Caco-2 (cell line): ENCODE measurements at regions of chr11 and their contacts with region 1.

Region 1: DNA sequence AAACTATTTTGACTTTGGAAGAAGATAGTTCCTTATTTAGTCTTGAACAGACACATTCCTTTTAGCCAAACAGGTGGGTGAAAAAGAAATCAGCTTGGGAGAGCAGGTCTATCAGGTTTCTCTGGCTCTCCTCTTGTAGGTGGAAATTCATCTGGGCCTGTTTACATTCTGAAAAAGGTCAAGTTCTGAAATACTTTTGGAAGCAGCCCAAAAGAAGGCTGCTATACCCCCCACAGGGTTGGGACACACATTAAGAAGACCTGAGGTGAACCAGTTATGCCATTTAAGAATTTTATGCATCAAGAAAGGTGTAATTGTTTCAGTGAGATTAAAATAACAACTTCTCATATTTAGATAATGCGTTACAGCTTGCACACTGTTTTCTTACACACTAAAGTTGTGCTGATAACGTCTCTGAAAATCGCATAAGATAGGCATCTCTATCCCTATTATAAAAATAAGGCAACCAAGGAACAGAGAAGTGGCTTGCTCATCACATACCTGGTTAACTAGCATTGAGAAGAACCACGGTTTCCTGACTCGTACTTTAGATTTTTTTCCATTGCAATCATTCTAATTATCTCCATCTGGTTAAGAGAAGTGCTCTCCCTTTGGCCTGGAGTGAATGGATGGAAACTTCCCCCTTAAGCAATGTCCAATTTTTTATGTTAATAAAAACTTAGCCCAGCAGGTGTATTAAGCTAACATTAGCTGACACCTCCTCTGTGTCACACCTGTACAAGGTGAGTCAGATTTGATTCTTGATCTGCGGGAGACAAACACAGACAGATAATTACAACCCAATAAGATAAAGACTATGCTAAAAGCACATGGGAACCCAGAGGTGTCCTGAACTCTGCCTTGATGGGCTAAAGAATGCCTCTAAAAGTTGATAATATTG is 60.5 kb upstream of the UCP3 start:
- DNase-seq: peak; percentile 53 to 76
- H3K4me3 ChIP-seq: no peak overlapping the region
- H3K4me3 Mint-ChIP-seq: no peak overlapping the region
- H3K27ac Mint-ChIP-seq: no peak overlapping the region
- H3K4me1 ChIP-seq: peaks cover 50% of the 10 kb centered on the region
- H3K4me1 Mint-ChIP-seq: peaks cover 46% of the 10 kb centered on the region
- H3K27me3 ChIP-seq: no peaks in the 10 kb centered on the region
- H3K27me3 Mint-ChIP-seq: no peaks in the 10 kb centered on the region
- CTCF ChIP-seq: no peak

Region 2: GRCh38 chr11:73752216-73752867 is 317.1 kb before region 1 on chr11:
- CTCF ChIA-PET with region 1: no interaction called
- POLR2A ChIA-PET with region 1: no interaction called
- intact Hi-C with region 1: no loop called
- DNase-seq: no peak
- H3K4me3 ChIP-seq: no peak overlapping the region
- H3K4me3 Mint-ChIP-seq: no peak overlapping the region
- H3K27ac Mint-ChIP-seq: peak overlapping the region; percentile 17
- H3K4me1 ChIP-seq: peaks cover 24% of the 10 kb centered on the region
- H3K4me1 Mint-ChIP-seq: peaks cover 31% of the 10 kb centered on the region
- H3K27me3 ChIP-seq: no peaks in the 10 kb centered on the region
- H3K27me3 Mint-ChIP-seq: no peaks in the 10 kb centered on the region
- CTCF ChIP-seq: no peak

Region 3: DNA sequence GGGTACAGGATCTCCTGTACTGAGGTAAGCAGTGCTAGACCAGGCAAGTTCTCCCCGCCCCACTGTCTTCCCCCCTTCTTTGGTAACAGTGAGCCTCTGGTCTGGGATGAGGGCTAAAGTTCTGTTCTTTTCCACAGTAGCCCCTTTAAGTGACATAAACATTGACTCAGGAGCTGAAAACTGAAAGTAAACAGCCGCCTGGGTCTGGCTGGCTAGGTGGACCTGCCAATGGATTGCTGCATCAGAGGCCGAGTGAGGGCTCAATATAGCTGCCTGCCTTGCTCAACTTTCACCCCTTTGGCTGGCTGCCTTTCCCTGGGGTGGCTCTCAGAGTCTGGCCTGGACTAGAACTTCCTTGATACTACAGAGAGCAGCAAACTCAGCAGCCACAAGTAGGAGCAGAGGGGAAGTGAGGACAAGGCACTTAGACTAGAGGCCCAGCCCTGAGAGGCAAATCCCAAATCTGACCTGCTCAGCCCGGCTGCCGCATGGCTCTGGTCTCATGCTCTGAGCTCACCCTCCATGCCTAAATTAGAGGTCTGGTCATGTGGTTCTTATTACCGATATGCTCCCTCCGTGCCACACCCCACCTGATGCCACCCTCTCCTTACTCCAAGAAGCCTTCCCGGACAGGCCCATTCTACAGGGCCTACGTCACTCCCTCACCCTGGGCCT is 50.9 kb before region 1 on chr11:
- CTCF ChIA-PET with region 1: no interaction called
- POLR2A ChIA-PET with region 1: no interaction called
- intact Hi-C with region 1: loop called (anchors 1 kb)
- DNase-seq: no peak
- H3K4me3 ChIP-seq: no peak overlapping the region
- H3K4me3 Mint-ChIP-seq: no peak overlapping the region
- H3K27ac Mint-ChIP-seq: peak overlapping the region; percentile 9
- H3K4me1 ChIP-seq: peaks cover 24% of the 10 kb centered on the region
- H3K4me1 Mint-ChIP-seq: peaks cover 2% of the 10 kb centered on the region
- H3K27me3 ChIP-seq: no peaks in the 10 kb centered on the region
- H3K27me3 Mint-ChIP-seq: no peaks in the 10 kb centered on the region
- CTCF ChIP-seq: no peak

Region 4: DNA sequence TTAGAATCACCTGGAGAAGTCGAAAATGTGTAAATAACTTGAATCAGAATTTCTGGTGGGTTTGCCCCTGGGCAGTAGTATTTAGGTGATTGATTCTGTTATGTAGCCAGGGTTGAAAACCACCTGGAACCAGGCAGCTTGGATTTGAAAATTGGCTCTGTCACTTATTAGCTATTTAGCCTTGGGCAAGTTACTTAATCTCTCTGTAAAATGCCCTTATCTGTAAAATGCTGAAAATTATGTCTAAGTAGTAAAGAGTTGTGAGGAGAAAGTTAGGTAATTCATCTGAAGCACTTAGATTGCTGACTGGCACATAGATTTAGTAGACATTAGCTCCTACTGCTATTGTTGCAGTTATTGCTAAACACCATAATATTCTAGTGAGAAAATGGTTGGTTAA is 151.0 kb after region 1 on chr11:
- CTCF ChIA-PET with region 1: no interaction called
- POLR2A ChIA-PET with region 1: no interaction called
- intact Hi-C with region 1: no loop called
- DNase-seq: peak in 1 of 2 experiments; percentile 25
- H3K4me3 ChIP-seq: no peak overlapping the region
- H3K4me3 Mint-ChIP-seq: no peak overlapping the region
- H3K27ac Mint-ChIP-seq: no peak overlapping the region
- H3K4me1 ChIP-seq: peaks cover 12% of the 10 kb centered on the region; the same call in 1 of the 2 replicates
- H3K4me1 Mint-ChIP-seq: peaks cover 8% of the 10 kb centered on the region
- H3K27me3 ChIP-seq: no peaks in the 10 kb centered on the region
- H3K27me3 Mint-ChIP-seq: no peaks in the 10 kb centered on the region
- CTCF ChIP-seq: no peak